Activated CD4-positive, alpha-beta memory T cell treated with anti-CD3 and anti-CD28 coated beads for 36 hours (primary cell): ENCODE measurements at regions of chr13 and their contacts with region 1.

Region 1: GRCh38 chr13:43905435-43906031 is 25.8 kb downstream of the LACC1 start:
- DNase-seq: peak; percentile 9
- H3K4me3 Mint-ChIP-seq: no peak overlapping the region
- H3K27ac Mint-ChIP-seq: no peak overlapping the region
- H3K4me1 Mint-ChIP-seq: peaks cover 3% of the 10 kb centered on the region
- H3K27me3 Mint-ChIP-seq: peaks cover 9% of the 10 kb centered on the region

Region 2: DNA sequence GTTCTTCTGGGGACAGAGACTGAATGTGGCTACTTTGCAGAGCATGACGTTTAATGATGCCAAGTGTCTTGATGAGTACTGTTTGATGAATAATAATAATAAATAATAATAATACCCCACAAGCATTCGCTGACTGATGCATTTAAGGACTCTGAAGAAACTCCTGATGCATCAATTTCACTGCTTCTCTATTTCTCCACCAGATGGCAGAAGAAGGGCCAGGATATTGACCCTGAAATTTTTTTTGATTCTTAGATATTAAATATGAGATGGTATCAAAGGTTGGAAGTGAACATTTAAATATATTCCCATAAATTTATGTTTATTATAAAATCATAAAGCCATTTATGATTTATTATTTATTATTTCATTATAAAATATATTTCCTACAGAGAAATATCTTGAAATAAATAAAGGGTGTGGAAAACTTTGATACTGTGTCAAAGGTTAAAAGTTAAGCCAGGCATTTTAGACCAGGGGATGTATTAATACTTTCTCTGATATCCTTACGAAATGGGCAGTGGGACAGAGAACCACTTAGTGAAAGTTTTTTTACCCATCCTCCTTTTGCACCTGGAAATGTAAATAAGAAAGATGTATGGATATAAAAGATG is 145.0 kb after region 1 on chr13:
- CTCF ChIA-PET with region 1: interaction called, 3 read pairs
- POLR2A ChIA-PET with region 1: no interaction called
- intact Hi-C with region 1: loop called (anchors 5 kb)
- DNase-seq: no peak
- H3K4me3 Mint-ChIP-seq: no peak overlapping the region
- H3K27ac Mint-ChIP-seq: no peak overlapping the region
- H3K4me1 Mint-ChIP-seq: peaks cover 4% of the 10 kb centered on the region
- H3K27me3 Mint-ChIP-seq: peaks cover 36% of the 10 kb centered on the region

Region 3: GRCh38 chr13:44191504-44192171 is 286.1 kb after region 1 on chr13:
- CTCF ChIA-PET with region 1: interaction called, 5 read pairs
- POLR2A ChIA-PET with region 1: no interaction called
- intact Hi-C with region 1: loop called (anchors 5 kb)
- DNase-seq: peak; percentile 56
- H3K4me3 Mint-ChIP-seq: no peak overlapping the region
- H3K27ac Mint-ChIP-seq: no peak overlapping the region
- H3K4me1 Mint-ChIP-seq: peaks cover 26% of the 10 kb centered on the region
- H3K27me3 Mint-ChIP-seq: peaks cover 16% of the 10 kb centered on the region

Region 4: GRCh38 chr13:44470638-44471562 is 565.4 kb after region 1 on chr13:
- CTCF ChIA-PET with region 1: interaction called, 21 read pairs
- POLR2A ChIA-PET with region 1: no interaction called
- intact Hi-C with region 1: loop called (anchors 1 kb)
- DNase-seq: no peak
- H3K4me3 Mint-ChIP-seq: no peak overlapping the region
- H3K27ac Mint-ChIP-seq: no peak overlapping the region
- H3K4me1 Mint-ChIP-seq: no peaks in the 10 kb centered on the region
- H3K27me3 Mint-ChIP-seq: no peaks in the 10 kb centered on the region